Caco-2 (cell line): ENCODE measurements at regions of chr14 and their contacts with region 1.

Region 1: GRCh38 chr14:50773632-50774541 is 57.1 kb downstream of the NIN start:
- DNase-seq: peak; percentile 52 to 73
- H3K4me3 ChIP-seq: no peak overlapping the region
- H3K4me3 Mint-ChIP-seq: no peak overlapping the region
- H3K27ac Mint-ChIP-seq: no peak overlapping the region
- H3K4me1 ChIP-seq: no peaks in the 10 kb centered on the region
- H3K4me1 Mint-ChIP-seq: no peaks in the 10 kb centered on the region
- H3K27me3 ChIP-seq: no peaks in the 10 kb centered on the region
- H3K27me3 Mint-ChIP-seq: no peaks in the 10 kb centered on the region
- CTCF ChIP-seq: peak; percentile 71 to 86

Region 2: GRCh38 chr14:50321009-50321660 is 452.8 kb before region 1 on chr14:
- CTCF ChIA-PET with region 1: interaction called, 3 read pairs
- POLR2A ChIA-PET with region 1: no interaction called
- intact Hi-C with region 1: loop called (anchors 5 kb)
- DNase-seq: peak; percentile 74 to 75
- H3K4me3 ChIP-seq: no peak overlapping the region
- H3K4me3 Mint-ChIP-seq: no peak overlapping the region
- H3K27ac Mint-ChIP-seq: no peak overlapping the region
- H3K4me1 ChIP-seq: no peaks in the 10 kb centered on the region; the same call in 1 of the 2 replicates
- H3K4me1 Mint-ChIP-seq: no peaks in the 10 kb centered on the region
- H3K27me3 ChIP-seq: no peaks in the 10 kb centered on the region
- H3K27me3 Mint-ChIP-seq: no peaks in the 10 kb centered on the region
- CTCF ChIP-seq: peak; percentile 73 to 90

Region 3: DNA sequence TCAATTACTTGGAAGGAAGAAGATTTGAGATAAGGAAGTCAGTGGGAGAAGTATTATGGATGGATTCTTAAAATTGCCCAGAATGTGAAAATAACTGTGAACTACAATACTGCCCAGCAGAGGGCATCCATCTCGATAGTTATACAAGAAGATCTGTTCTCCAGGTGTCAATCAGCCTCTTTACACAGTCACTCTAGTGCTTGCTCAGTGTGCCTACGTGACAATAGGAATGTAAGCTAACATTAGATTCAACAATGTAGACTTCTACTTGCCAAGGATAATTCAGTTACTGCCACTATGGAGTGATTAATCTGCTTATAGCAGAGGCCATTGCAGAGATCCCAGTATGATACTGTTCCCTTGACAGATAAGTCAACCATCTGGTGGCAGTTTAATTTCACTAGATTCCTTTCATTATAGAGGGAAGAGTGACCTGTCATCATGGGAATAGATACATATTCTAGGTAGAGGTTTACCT is 230.9 kb before region 1 on chr14:
- CTCF ChIA-PET with region 1: interaction called, 6 read pairs
- POLR2A ChIA-PET with region 1: no interaction called
- intact Hi-C with region 1: loop called (anchors 1 kb)
- DNase-seq: peak in 1 of 2 experiments; percentile 42
- H3K4me3 ChIP-seq: no peak overlapping the region
- H3K4me3 Mint-ChIP-seq: no peak overlapping the region
- H3K27ac Mint-ChIP-seq: no peak overlapping the region
- H3K4me1 ChIP-seq: peaks cover 14% of the 10 kb centered on the region; the same call in 1 of the 2 replicates
- H3K4me1 Mint-ChIP-seq: peaks cover 6% of the 10 kb centered on the region
- H3K27me3 ChIP-seq: no peaks in the 10 kb centered on the region
- H3K27me3 Mint-ChIP-seq: no peaks in the 10 kb centered on the region
- CTCF ChIP-seq: peak; percentile 36 to 50

Region 4: DNA sequence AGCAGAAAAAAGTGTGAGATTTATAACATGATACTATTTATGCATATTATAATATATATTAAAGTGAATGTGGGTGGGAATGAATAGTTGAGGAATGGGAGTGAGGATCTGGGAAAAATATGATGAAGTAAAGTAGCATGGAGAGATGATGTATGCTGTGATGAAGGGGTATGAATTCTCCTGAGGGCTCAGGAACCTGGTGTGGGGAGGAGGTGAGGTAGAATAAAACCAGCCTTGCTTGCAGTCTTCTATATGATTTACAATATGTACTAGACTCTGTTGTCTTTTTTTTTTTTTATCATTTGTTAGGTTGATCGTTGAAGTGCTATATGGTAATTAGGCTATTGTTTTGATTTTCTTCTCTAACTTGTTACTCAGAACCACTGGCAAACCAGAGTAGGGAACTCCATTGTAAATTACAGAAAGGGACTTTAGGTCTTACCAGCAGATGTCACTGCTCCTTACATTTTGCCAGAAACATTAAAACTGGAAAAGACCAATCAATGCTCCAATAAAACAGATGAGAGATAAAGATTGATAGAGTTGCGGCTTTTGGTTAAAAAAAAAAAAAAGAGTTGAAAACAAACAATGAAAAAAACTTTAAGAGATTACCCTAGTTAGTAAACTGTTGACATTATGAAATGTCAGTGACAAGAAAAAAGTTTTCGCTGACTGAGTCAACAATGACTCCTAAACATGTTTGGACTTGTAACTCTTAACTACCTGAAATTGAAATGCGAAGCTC is 174.0 kb before region 1 on chr14:
- CTCF ChIA-PET with region 1: interaction called, 7 read pairs
- POLR2A ChIA-PET with region 1: no interaction called
- intact Hi-C with region 1: loop called (anchors 1 kb)
- DNase-seq: peak in 1 of 2 experiments; percentile 37
- H3K4me3 ChIP-seq: no peak overlapping the region
- H3K4me3 Mint-ChIP-seq: peak overlapping the region; percentile 30
- H3K27ac Mint-ChIP-seq: no peak overlapping the region
- H3K4me1 ChIP-seq: no peaks in the 10 kb centered on the region
- H3K4me1 Mint-ChIP-seq: peaks cover 9% of the 10 kb centered on the region
- H3K27me3 ChIP-seq: no peaks in the 10 kb centered on the region
- H3K27me3 Mint-ChIP-seq: no peaks in the 10 kb centered on the region
- CTCF ChIP-seq: peak; percentile 52 to 55

Region 5: GRCh38 chr14:50619556-50620141 is 154.2 kb before region 1 on chr14:
- CTCF ChIA-PET with region 1: interaction called, 3 read pairs
- POLR2A ChIA-PET with region 1: no interaction called
- intact Hi-C with region 1: loop called (anchors 1 kb)
- DNase-seq: peak in 1 of 2 experiments; percentile 25
- H3K4me3 ChIP-seq: no peak overlapping the region
- H3K4me3 Mint-ChIP-seq: no peak overlapping the region
- H3K27ac Mint-ChIP-seq: no peak overlapping the region
- H3K4me1 ChIP-seq: no peaks in the 10 kb centered on the region
- H3K4me1 Mint-ChIP-seq: peaks cover 6% of the 10 kb centered on the region
- H3K27me3 ChIP-seq: no peaks in the 10 kb centered on the region
- H3K27me3 Mint-ChIP-seq: no peaks in the 10 kb centered on the region
- CTCF ChIP-seq: peak; percentile 65 to 66

Region 6: GRCh38 chr14:50714450-50715073 is 59.3 kb before region 1 on chr14:
- CTCF ChIA-PET with region 1: interaction called, 7 read pairs
- POLR2A ChIA-PET with region 1: no interaction called
- intact Hi-C with region 1: loop called (anchors 5 kb)
- DNase-seq: peak in 1 of 2 experiments; percentile 34
- H3K4me3 ChIP-seq: no peak overlapping the region
- H3K4me3 Mint-ChIP-seq: no peak overlapping the region
- H3K27ac Mint-ChIP-seq: no peak overlapping the region
- H3K4me1 ChIP-seq: no peaks in the 10 kb centered on the region
- H3K4me1 Mint-ChIP-seq: no peaks in the 10 kb centered on the region
- H3K27me3 ChIP-seq: no peaks in the 10 kb centered on the region
- H3K27me3 Mint-ChIP-seq: no peaks in the 10 kb centered on the region
- CTCF ChIP-seq: peak; percentile 10 to 66

Region 7: DNA sequence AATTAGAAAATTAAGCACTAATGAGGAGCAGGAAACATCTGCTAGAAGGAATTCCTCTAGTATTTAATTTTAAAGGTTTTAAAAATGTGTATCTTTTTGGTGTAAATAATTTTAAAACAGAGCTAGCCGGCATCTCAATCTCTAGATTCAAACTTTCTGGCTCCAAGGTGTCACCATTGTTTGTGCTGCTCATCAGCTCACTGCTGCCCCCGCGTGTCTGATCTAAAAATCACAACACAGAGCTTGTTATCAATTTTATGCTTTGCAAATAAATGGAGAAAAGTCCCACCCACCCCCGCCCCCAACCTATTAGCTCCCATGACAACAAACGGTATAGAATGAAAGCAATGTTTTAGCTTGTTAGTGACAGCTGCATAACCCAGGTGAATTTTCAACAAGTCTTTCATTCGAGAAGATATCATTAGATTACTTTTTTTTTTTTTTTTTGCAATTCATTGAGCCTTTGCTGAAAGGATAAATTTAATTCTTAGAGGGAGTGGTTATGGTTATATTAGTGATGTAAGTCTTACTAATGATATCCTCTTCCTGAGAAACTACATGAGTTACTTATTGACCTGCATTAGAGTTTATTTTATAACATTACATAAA is 86.7 kb after region 1 on chr14:
- CTCF ChIA-PET with region 1: interaction called, 13 read pairs
- POLR2A ChIA-PET with region 1: no interaction called
- intact Hi-C with region 1: loop called (anchors 2 kb)
- DNase-seq: peak; percentile 78 to 87
- H3K4me3 ChIP-seq: no peak overlapping the region
- H3K4me3 Mint-ChIP-seq: peak overlapping the region; percentile 67
- H3K27ac Mint-ChIP-seq: no peak overlapping the region
- H3K4me1 ChIP-seq: no peaks in the 10 kb centered on the region
- H3K4me1 Mint-ChIP-seq: no peaks in the 10 kb centered on the region
- H3K27me3 ChIP-seq: no peaks in the 10 kb centered on the region; the same call in 1 of the 2 replicates
- H3K27me3 Mint-ChIP-seq: peaks cover 3% of the 10 kb centered on the region
- CTCF ChIP-seq: peak; percentile 73 to 80

Region 8: GRCh38 chr14:51006781-51007211 is 232.9 kb after region 1 on chr14:
- CTCF ChIA-PET with region 1: no interaction called
- POLR2A ChIA-PET with region 1: no interaction called
- intact Hi-C with region 1: no loop called
- DNase-seq: no peak
- H3K4me3 ChIP-seq: no peak overlapping the region
- H3K4me3 Mint-ChIP-seq: no peak overlapping the region
- H3K27ac Mint-ChIP-seq: no peak overlapping the region
- H3K4me1 ChIP-seq: peaks cover 13% of the 10 kb centered on the region
- H3K4me1 Mint-ChIP-seq: no peaks in the 10 kb centered on the region
- H3K27me3 ChIP-seq: no peaks in the 10 kb centered on the region
- H3K27me3 Mint-ChIP-seq: no peaks in the 10 kb centered on the region
- CTCF ChIP-seq: no peak